Left cardiac atrium (tissue), 4 donors: ENCODE measurements at regions of chr13 and their contacts with region 1.

Region 1: GRCh38 chr13:105127732-105128131 is 1407.7 kb downstream of the EFNB2 start:
- DNase-seq: no peak
- ATAC-seq: no peak

Region 2: DNA sequence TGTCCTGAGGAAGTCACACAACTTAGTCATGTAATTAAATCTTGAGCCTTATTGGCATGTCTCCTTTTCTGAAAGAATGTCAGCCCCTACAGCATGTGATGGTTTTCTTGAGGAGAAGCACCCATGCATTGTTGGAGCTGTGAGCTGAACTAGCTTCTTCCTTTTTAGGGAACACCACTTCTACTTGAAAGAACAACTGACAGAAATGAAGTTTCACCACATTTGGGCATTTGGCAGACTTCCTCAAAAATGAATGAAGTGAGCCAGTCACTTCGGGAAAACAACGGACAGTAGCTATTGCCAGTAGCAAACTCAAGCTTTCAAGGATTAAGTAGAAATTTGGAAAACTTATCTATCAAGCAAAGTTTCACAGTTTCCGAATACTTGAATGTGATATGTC is 56.5 kb after region 1 on chr13:
- intact Hi-C with region 1: loop called in 1 of 2 experiments (anchors 10 kb)
- DNase-seq: no peak
- ATAC-seq: no peak

Region 3: GRCh38 chr13:105247830-105248229 is 120.1 kb after region 1 on chr13:
- intact Hi-C with region 1: no loop called
- DNase-seq: no peak
- ATAC-seq: no peak